ENCODE measurements at regions of chr4 and their contacts with region 1.

Region 1: GRCh38 chr4:128809477-128810330 is at the start of gene JADE1:
- DNase-seq: peak; percentile 95
- H3K4me3 Mint-ChIP-seq: peak within 1 kb of the TSS; percentile 89
- H3K27ac Mint-ChIP-seq: peak within 1 kb of the TSS; percentile 96
- H3K4me1 Mint-ChIP-seq: peaks cover 13% of the 10 kb centered on the region
- H3K27me3 Mint-ChIP-seq: no peaks in the 10 kb centered on the region
- total RNA-seq, gene JADE1: 25.4 to 28.3 TPM

Region 2: DNA sequence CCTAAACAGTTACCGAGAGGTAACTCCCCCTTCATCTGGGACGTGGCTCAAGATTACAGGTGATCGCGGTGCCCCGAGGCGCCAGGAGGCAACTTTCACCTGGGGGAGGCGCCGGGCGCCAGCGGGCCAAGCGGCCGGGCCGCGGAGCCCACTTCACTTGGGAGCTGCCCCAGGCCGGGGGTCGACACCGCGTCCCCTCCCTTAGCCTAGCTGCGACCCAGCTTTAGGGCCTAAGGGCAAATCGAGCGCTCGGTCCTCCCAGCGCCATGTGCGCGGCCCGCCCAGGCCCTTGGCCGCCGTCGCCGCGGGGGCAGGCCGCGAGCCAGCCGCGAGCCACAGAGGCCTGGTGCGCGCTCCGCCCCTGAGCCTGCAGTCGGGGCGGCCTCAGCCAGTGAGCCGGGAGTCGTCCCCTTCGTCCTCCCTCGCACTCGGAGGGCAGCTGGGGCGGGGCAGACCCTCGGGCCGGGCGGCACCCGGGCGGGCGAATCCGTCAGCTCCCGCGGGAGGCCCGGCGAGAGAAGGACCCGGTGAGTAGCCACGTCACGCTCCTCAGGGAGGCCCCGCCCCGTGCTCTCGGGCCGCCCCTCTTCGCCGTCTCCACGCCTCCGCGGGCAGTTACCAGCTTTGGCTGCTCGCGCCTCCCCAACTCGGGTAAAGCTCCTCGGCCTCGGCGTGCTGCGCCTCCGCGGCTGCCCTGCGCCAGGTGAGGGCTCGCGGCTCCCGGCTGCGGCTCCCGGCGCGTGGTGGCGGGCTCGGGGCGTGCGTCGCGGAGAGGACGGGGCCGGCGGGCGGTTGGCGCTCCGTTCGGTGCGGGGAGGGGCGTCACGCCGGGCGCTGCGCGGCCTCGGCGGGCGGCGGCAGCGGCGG is 748.8 kb before region 1 on chr4 and contains the start of gene LARP1B:
- CTCF ChIA-PET with region 1: interaction called, 4 read pairs
- POLR2A ChIA-PET with region 1: interaction called, 10 read pairs
- intact Hi-C with region 1: loop called (anchors 2 kb)
- DNase-seq: peak; percentile 95
- H3K4me3 Mint-ChIP-seq: peak within 1 kb of the TSS; percentile 87
- H3K27ac Mint-ChIP-seq: peak within 1 kb of the TSS; percentile 87
- H3K4me1 Mint-ChIP-seq: peaks cover 15% of the 10 kb centered on the region
- H3K27me3 Mint-ChIP-seq: no peaks in the 10 kb centered on the region
- total RNA-seq, gene LARP1B: 23.5 to 25.5 TPM

Region 3: DNA sequence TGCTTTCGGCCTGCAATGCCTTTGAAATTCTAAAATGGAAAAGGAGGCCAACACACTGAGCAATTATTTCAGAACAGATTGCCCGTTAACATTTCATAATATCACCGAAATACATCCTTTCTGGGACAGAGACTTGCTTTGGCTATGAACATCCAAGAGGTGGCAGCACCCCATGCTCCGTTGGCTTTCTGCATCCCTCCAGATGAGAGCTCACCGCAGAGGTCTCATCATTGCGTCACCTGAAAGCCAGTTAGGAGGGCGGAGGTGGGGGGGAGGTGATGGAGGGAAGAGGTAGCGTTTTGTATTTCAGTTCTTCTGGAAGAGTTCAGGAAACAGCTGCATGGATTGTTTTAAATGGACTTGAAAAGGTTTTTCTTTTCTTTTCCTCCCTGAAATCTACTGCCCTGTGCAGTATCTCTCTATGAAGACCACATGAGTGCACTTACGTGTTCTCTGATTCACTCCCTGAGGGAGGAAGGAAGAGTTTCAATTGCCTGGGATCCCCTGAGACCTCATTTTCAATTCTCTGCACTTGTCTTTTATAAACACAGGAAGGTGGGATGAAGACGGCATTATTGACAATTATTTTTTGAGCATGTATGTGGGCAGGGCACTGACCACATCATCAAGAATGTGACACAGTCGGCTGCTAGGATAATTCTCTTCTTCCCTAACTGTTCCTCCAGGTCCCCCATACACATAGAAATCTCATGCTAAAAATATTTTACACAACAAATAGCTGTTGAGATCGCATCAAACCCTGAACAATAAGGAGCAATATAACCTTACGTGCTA is 355.2 kb before region 1 on chr4:
- CTCF ChIA-PET with region 1: interaction called, 6 read pairs
- POLR2A ChIA-PET with region 1: no interaction called
- intact Hi-C with region 1: loop called (anchors 1 kb)
- DNase-seq: peak; percentile 79
- H3K4me3 Mint-ChIP-seq: peak overlapping the region; percentile 7
- H3K27ac Mint-ChIP-seq: no peak overlapping the region
- H3K4me1 Mint-ChIP-seq: peaks cover 9% of the 10 kb centered on the region
- H3K27me3 Mint-ChIP-seq: no peaks in the 10 kb centered on the region

Region 4: GRCh38 chr4:128782076-128782715 is 27.5 kb before region 1 on chr4:
- CTCF ChIA-PET with region 1: interaction called, 5 read pairs
- POLR2A ChIA-PET with region 1: no interaction called
- intact Hi-C with region 1: loop called (anchors 1 kb)
- DNase-seq: peak; percentile 61
- H3K4me3 Mint-ChIP-seq: no peak overlapping the region
- H3K27ac Mint-ChIP-seq: no peak overlapping the region
- H3K4me1 Mint-ChIP-seq: no peaks in the 10 kb centered on the region
- H3K27me3 Mint-ChIP-seq: peaks cover 2% of the 10 kb centered on the region

Region 5: GRCh38 chr4:128854433-128854832 is 44.7 kb after region 1 on chr4:
- CTCF ChIA-PET with region 1: interaction called, 5 read pairs
- POLR2A ChIA-PET with region 1: interaction called, 8 read pairs
- intact Hi-C with region 1: loop called (anchors 1 kb)
- DNase-seq: no peak
- H3K4me3 Mint-ChIP-seq: no peak overlapping the region
- H3K27ac Mint-ChIP-seq: peak overlapping the region; percentile 83
- H3K4me1 Mint-ChIP-seq: peaks cover 32% of the 10 kb centered on the region
- H3K27me3 Mint-ChIP-seq: no peaks in the 10 kb centered on the region

Region 6: DNA sequence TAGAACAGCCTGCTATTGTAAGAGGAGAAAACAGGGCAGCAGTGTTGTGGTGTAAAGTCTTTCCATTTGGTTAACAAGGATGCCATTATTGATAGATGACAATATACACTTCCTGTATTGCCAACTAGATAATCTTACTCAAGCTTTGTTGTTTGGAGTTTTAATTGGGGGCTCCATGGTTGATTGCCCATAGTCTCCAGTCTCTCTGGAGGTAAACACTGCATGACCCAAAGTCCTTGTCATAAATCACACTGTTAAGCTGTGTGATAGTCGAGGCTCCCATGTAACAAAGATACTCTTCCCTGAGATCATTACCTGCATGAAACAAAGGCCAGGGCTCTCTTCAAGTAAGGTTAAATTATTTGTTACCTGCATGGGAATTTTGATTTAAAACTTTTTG is 680.8 kb after region 1 on chr4:
- CTCF ChIA-PET with region 1: no interaction called
- POLR2A ChIA-PET with region 1: no interaction called
- intact Hi-C with region 1: no loop called
- DNase-seq: no peak
- H3K4me3 Mint-ChIP-seq: no peak overlapping the region
- H3K27ac Mint-ChIP-seq: no peak overlapping the region
- H3K4me1 Mint-ChIP-seq: no peaks in the 10 kb centered on the region
- H3K27me3 Mint-ChIP-seq: no peaks in the 10 kb centered on the region

Measured in activated CD4-positive, alpha-beta memory T cell treated with anti-CD3 and anti-CD28 coated beads for 36 hours (primary cell).